Activated CD4-positive, alpha-beta T cell treated with anti-CD3 and anti-CD28 coated beads for 36 hours (primary cell): ENCODE measurements at regions of chr12 and their contacts with region 1.

Region 1: DNA sequence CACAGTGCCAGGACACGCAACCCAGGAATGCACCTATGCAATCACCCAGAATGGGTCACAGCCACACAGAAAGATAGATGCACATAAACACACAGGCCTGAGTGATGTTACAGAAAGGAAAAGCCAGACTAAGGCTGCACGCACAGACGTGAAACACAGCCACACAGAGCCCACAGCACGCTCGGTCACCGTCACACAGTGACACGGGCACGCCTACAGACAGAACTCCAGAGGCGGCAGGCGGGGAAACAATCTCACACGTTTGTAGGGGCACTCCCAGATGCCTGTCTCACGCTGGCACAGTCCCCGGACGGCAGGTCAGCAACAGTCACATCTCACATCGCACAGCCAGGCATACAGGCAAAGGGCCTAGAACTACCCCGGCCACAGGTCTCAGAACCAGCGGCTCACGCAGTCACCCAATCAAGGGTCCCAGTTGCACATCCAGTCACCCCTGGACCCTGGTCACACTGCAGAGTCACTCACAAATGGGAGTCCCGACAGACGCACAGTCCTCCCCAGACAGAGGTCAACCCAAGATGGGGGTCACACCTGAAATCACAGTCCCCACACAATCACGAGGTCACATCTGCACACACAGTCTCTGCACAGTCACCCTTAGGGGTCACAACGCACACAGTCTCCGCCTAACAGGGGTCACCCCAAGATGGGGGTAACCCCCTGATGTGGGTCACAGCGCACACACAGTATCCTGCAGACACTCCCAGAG is 790 bp downstream of the SSH1 start:
- DNase-seq: peak; percentile 81
- ATAC-seq: peak; percentile 64
- H3K4me3 Mint-ChIP-seq: peak overlapping the region; percentile 82
- H3K27ac Mint-ChIP-seq: peak overlapping the region; percentile 86
- H3K4me1 Mint-ChIP-seq: peaks cover 43% of the 10 kb centered on the region
- H3K27me3 Mint-ChIP-seq: peaks cover 2% of the 10 kb centered on the region

Region 2: DNA sequence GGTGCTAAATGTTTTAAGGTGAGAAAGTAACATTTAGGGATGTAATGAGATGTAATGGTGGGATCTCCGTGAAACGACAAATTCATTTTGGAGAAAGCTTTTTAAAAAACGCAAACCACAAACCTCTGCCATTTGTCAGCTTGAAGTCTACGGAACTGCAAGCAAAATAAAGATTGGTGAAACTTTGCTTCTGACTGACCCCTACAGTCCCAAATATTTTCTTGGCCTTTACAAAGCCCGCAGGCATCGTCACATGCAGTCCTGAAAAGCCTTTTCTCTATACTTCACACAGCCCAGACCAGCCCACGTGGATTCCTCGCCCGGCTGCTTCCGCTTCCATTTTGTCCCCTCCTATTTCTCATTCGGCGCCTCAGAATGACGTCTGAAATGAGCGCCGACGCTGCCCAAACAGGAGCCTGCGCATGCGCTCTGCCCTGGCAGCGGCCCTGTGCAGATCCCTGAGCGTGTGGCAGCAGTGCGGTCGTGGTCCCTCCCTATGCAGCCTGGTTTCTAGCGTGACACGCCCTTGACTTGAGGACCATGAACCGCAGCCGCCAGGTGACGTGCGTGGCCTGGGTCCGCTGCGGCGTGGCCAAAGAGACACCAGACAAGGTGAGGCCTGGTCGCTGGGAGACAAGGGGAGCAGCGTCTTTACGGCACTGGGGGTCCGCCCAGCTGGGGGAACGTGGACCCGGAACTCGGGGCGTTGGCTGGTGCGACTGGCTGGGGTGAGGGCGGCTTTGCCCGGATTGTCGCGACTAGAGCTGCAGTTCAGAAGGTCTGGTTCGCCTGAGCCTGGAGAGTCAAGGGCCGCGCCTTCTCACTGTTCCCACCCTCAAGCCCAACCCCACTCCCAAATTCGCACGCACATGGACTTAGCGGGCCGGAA is 1171.0 kb before region 1 on chr12 and contains the start of gene PWP1:
- CTCF ChIA-PET with region 1: no interaction called
- POLR2A ChIA-PET with region 1: no interaction called
- intact Hi-C with region 1: loop called in 1 of 2 experiments (anchors 5 kb)
- DNase-seq: peak; percentile 97
- ATAC-seq: peak; percentile 92
- H3K4me3 Mint-ChIP-seq: peak within 1 kb of the TSS; percentile 94
- H3K27ac Mint-ChIP-seq: peak within 1 kb of the TSS; percentile 94
- H3K4me1 Mint-ChIP-seq: peaks cover 27% of the 10 kb centered on the region
- H3K27me3 Mint-ChIP-seq: no peaks in the 10 kb centered on the region
- total RNA-seq, gene PWP1: 59.5 to 60.0 TPM

Region 3: GRCh38 chr12:108731105-108731865 is 125.3 kb before region 1 on chr12 and contains the start of gene CORO1C:
- CTCF ChIA-PET with region 1: no interaction called
- POLR2A ChIA-PET with region 1: no interaction called
- intact Hi-C with region 1: loop called in 1 of 2 experiments (anchors 1 kb)
- DNase-seq: peak; percentile 98
- ATAC-seq: peak; percentile 78
- H3K4me3 Mint-ChIP-seq: peak within 1 kb of the TSS; percentile 88
- H3K27ac Mint-ChIP-seq: peak within 1 kb of the TSS; percentile 93
- H3K4me1 Mint-ChIP-seq: peaks cover 36% of the 10 kb centered on the region
- H3K27me3 Mint-ChIP-seq: no peaks in the 10 kb centered on the region
- total RNA-seq, gene CORO1C: 83.5 to 90.8 TPM

Region 4: DNA sequence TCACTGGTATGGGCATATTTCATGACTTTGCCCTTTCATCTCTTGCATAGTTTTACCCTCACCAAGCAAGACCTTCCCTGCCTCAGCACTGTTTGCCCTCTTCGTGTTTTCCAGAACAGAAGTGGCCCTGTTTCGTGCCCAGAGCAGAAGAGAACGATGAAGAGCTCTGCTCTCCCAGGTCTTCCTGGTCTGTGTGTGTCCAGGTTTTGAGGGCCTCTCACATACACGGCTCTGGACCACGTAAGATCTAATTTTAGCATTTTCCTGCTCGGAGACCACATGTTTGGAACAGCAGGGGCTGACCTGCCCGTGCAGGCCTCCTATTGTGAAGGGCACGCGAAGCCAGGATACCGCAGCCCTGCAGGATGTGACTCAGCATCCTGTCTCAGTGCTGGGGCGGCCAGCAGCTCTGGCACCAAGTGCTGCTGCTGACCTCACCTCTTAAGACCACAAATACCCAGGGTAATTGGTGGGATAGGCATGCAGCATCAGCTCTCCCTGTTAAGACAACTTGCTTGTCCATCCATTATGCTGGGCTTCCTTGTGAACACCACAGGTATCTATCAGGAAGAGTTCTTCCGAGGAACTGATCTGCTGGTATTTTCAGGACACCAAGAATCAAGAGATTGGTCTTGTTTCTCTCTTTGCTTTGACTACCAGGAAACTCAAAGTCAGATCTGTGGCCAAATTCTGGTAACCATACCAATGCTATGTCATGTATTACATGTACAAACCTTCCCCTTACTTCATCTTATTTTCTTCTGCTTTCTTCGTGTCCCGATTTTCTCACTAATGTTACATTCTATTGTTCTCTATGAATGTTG is 18.2 kb before region 1 on chr12:
- CTCF ChIA-PET with region 1: no interaction called
- POLR2A ChIA-PET with region 1: interaction called, 4 read pairs
- intact Hi-C with region 1: loop called (anchors 1 to 2 kb)
- DNase-seq: peak; percentile 83
- ATAC-seq: peak; percentile 95
- H3K4me3 Mint-ChIP-seq: peak overlapping the region; percentile 57
- H3K27ac Mint-ChIP-seq: peak overlapping the region; percentile 96
- H3K4me1 Mint-ChIP-seq: peaks cover 36% of the 10 kb centered on the region
- H3K27me3 Mint-ChIP-seq: no peaks in the 10 kb centered on the region

Region 5: GRCh38 chr12:108921946-108922345 is 65.4 kb after region 1 on chr12:
- CTCF ChIA-PET with region 1: no interaction called
- POLR2A ChIA-PET with region 1: no interaction called
- intact Hi-C with region 1: no loop called
- DNase-seq: no peak
- ATAC-seq: no peak
- H3K4me3 Mint-ChIP-seq: no peak overlapping the region
- H3K27ac Mint-ChIP-seq: no peak overlapping the region
- H3K4me1 Mint-ChIP-seq: no peaks in the 10 kb centered on the region
- H3K27me3 Mint-ChIP-seq: peaks cover 6% of the 10 kb centered on the region

Region 6: DNA sequence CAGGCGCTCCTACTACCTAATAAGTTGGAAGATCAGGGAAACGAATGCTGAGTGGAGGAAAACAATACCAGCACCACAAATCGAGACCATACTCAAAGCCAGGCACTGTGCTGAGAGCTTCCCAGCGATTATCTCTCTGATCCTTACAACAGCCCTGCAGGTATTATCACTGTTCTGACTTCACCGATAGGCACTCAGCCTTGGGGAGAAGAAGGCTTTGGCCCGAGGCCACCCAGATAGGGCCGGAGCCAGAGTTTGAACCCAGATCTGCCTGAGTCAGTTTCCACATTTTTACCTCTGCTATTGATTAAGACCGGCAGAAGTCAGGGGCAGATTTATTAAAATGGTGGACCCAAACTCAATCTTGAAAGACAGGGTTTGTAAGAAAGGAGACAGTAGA is 159.4 kb after region 1 on chr12:
- CTCF ChIA-PET with region 1: no interaction called
- POLR2A ChIA-PET with region 1: no interaction called
- intact Hi-C with region 1: no loop called
- DNase-seq: no peak
- ATAC-seq: no peak
- H3K4me3 Mint-ChIP-seq: no peak overlapping the region
- H3K27ac Mint-ChIP-seq: no peak overlapping the region
- H3K4me1 Mint-ChIP-seq: peaks cover 2% of the 10 kb centered on the region
- H3K27me3 Mint-ChIP-seq: peaks cover 21% of the 10 kb centered on the region

Region 7: DNA sequence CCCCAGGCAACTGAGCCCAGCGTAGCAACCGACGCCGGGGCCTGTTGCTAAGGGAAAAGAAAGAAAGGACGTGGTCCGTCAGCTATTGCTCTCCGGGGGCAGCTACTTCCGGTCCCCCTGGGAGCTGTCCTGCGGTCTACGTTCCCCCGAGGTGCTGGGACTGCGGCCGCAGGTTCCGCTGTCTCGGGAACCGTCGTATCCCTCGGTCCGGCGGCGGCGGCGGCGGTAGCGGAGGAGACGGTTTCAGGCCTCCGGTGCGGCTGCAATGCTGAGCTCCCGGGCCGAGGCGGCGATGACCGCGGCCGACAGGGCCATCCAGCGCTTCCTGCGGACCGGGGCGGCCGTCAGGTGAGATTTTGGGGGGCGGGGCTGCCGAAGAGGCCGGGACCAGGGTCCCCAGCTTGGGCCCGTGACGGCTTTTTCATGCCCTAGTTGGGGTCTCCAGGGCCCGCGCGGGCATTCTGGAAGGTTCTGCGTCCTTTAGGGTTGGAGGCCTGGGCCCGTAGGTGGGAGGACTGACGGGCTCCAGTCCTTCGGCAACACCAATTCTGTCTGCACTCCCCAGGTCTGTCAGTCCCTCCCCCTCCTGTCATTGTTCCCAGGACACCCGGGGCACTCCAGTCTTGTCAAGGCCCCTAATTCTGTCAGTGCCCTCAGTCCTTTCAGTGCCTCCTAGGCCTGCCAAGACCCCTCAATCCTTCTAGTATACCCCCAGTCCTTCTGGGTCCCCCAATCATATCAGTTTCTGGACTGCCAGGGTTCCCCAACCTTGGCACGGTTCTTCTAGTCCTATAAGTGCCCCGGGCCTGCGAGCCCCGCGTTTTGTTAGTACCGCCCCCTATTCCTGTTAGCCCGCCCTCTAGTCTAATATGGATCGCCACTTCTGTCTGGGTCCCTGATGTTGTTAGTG is 196.1 kb after region 1 on chr12 and contains the start of gene USP30:
- CTCF ChIA-PET with region 1: no interaction called
- POLR2A ChIA-PET with region 1: interaction called, 3 read pairs
- intact Hi-C with region 1: loop called in 1 of 2 experiments (anchors 1 kb)
- DNase-seq: peak; percentile 91
- ATAC-seq: peak; percentile 70
- H3K4me3 Mint-ChIP-seq: peak within 1 kb of the TSS; percentile 86
- H3K27ac Mint-ChIP-seq: peak within 1 kb of the TSS; percentile 97
- H3K4me1 Mint-ChIP-seq: peaks cover 6% of the 10 kb centered on the region
- H3K27me3 Mint-ChIP-seq: no peaks in the 10 kb centered on the region
- total RNA-seq, gene USP30: 9.2 to 14.5 TPM

Region 8: GRCh38 chr12:109763201-109763841 is 906.7 kb after region 1 on chr12:
- CTCF ChIA-PET with region 1: no interaction called
- POLR2A ChIA-PET with region 1: no interaction called
- intact Hi-C with region 1: no loop called
- DNase-seq: peak; percentile 45
- ATAC-seq: peak; percentile 90
- H3K4me3 Mint-ChIP-seq: no peak overlapping the region
- H3K27ac Mint-ChIP-seq: no peak overlapping the region
- H3K4me1 Mint-ChIP-seq: peaks cover 5% of the 10 kb centered on the region
- H3K27me3 Mint-ChIP-seq: no peaks in the 10 kb centered on the region